ENCODE measurements at regions of chr2 and their contacts with region 1.

Region 1: DNA sequence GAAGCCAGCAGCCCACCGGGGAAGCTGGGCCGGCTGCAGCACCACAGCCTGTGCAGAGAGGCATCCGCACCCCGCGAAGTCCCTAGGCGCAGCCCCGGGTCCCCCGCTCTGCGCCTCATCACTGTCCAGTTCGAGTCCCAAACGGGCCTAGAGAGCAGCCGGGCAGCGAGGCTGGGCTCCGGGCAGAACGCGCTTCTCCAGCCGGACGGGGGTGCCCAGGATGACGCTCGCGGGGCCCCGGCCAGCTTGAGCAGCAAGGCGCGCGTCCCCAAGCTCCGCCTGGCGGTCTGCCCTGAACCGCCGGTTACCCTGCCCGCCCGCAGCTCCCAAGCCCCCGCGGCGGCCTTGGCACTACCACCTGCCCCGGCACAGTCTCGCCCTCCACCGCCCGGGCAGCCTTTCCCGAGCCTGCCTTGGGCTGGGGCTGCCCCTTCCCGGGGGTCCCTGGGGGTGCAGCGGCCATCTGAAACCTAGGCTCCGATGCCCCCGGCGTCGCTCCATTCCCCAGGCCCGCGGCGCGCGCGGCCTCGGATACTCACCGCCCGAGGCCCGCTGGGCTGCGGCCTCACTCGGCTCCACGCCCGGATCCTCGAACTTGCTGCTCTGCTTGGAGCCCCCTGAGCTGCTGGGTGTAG is 591 bp downstream of the SLC16A14 start:
- DNase-seq: peak; percentile 69
- ATAC-seq: peak; percentile 84

Region 2: GRCh38 chr2:230130668-230131364 is 62.7 kb after region 1 on chr2:
- intact Hi-C with region 1: loop called (anchors 2 kb)
- DNase-seq: peak; percentile 79
- ATAC-seq: peak; percentile 88

Region 3: DNA sequence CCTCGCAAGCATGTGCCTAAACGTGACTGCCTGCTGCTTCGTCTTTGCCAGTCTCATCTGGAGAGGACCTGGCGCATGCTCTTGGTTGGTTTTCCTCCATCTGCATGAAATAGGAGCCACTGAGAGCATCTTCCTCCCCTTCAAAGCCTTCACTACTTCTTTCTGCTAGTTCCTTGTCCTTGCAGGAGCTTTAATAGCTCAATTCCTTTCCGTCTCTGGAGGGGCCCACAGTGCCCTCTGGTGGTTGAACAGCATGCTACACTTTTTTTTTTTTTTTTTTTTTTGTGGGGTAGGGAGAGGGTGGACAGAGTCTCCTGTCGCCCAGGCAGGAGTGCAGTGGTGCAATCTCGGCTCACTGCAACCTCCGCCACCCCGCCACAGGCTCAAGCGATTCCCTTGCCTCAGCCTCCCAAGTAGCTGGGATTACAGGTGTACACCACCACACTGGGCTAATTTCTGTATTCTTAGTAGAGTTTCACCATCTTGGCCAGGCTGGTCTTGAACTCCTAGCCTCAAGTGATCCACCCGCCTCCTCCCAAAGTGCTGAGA is 92.1 kb after region 1 on chr2:
- intact Hi-C with region 1: loop called (anchors 5 kb)
- DNase-seq: peak; percentile 57
- ATAC-seq: peak; percentile 80

Region 4: GRCh38 chr2:230209422-230210051 is 141.4 kb after region 1 on chr2:
- intact Hi-C with region 1: no loop called
- DNase-seq: no peak
- ATAC-seq: no peak